ENCODE measurements at regions of chr5 and their contacts with region 1.

Region 1: GRCh38 chr5:64595031-64595855 is 89.4 kb downstream of the RGS7BP start:
- DNase-seq: no peak
- ATAC-seq: no peak
- H3K4me3 ChIP-seq: no peak overlapping the region
- H3K27ac ChIP-seq: no peak overlapping the region
- H3K4me1 ChIP-seq: no peaks in the 10 kb centered on the region
- H3K27me3 ChIP-seq: no peaks in the 10 kb centered on the region
- CTCF ChIP-seq: peak; percentile 30

Region 2: DNA sequence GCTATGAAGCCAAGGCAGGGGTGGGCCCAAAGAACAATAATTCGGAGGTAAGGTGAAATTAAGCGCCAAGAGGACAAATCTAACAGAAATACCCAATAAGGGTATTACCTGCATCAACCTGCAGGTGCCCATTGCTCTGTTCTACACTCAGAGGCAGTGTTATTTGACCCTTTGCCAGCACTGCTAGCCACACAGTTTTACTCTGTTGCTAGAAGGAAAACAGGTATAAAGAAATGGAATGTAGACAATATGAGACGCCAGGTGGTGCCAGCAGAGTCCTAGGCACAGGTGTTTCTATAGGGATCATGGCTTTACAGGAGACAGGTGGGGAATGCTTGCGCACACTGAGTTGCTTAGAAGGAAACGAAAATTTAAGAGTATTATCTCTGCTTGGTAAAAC is 834.3 kb before region 1 on chr5:
- intact Hi-C with region 1: no loop called
- DNase-seq: no peak
- ATAC-seq: no peak
- H3K4me3 ChIP-seq: no peak overlapping the region
- H3K27ac ChIP-seq: no peak overlapping the region
- H3K4me1 ChIP-seq: no peaks in the 10 kb centered on the region
- H3K27me3 ChIP-seq: no peaks in the 10 kb centered on the region
- CTCF ChIP-seq: no peak

Region 3: GRCh38 chr5:64505769-64506566 is 89.3 kb before region 1 on chr5 and contains the start of gene RGS7BP:
- intact Hi-C with region 1: loop called in 1 of 2 experiments (anchors 5 kb)
- DNase-seq: peak; percentile 20 to 63
- ATAC-seq: peak; percentile 77 to 94 (median 88)
- H3K4me3 ChIP-seq: peak within 1 kb of the TSS; percentile 78
- H3K27ac ChIP-seq: no peak within 1 kb of the TSS
- H3K4me1 ChIP-seq: peaks cover 3% of the 10 kb centered on the region
- H3K27me3 ChIP-seq: peaks cover 0 to 5% (median 0%) of the 10 kb centered on the region in 3 donors
- CTCF ChIP-seq: no peak
- total RNA-seq, gene RGS7BP: 0.17 to 1.5 (median 0.41) TPM

Region 4: DNA sequence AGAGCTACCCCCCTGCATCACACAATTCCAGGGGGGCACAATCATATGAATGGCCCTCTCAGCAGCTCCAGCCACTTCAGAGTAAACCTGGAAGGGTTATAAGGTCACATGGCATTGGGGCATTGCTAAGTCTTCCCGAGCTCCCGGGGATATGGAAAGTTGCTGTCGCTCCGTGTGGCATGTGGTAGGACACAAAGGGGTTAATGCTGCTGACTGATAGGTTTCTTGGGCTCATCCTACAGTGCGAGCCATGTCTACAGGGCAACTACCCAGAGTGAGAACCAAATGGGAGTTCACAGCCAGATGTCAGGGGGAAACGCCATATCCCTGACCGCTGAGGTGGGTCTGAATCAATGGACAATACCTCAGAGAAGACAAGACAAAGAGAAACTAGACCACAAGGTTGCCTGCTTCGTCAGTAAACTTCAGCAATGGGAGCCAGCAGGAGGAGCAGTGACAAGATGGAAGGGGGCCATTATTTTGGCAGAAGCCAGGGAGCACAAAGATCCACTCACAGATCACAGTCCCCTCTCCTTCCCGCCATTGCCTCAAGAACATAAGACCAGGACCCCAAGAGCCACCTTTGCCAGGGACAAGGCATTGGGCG is 42.7 kb after region 1 on chr5:
- intact Hi-C with region 1: no loop called
- DNase-seq: no peak
- ATAC-seq: no peak
- H3K4me3 ChIP-seq: no peak overlapping the region
- H3K27ac ChIP-seq: no peak overlapping the region
- H3K4me1 ChIP-seq: no peaks in the 10 kb centered on the region
- H3K27me3 ChIP-seq: no peaks in the 10 kb centered on the region
- CTCF ChIP-seq: no peak